PC-3 (cell line): ENCODE measurements at regions of chr3 and their contacts with region 1.

Region 1: GRCh38 chr3:194592798-194593752 is 40.1 kb downstream of the TMEM44 start:
- DNase-seq: peak; percentile 99
- ATAC-seq: peak; percentile 93
- H3K4me3 ChIP-seq: no peak overlapping the region
- H3K27ac ChIP-seq: peak overlapping the region; percentile 57
- H3K4me1 ChIP-seq: peaks cover 22% of the 10 kb centered on the region
- H3K27me3 ChIP-seq: no peaks in the 10 kb centered on the region
- CTCF ChIP-seq: peak; percentile 41

Region 2: DNA sequence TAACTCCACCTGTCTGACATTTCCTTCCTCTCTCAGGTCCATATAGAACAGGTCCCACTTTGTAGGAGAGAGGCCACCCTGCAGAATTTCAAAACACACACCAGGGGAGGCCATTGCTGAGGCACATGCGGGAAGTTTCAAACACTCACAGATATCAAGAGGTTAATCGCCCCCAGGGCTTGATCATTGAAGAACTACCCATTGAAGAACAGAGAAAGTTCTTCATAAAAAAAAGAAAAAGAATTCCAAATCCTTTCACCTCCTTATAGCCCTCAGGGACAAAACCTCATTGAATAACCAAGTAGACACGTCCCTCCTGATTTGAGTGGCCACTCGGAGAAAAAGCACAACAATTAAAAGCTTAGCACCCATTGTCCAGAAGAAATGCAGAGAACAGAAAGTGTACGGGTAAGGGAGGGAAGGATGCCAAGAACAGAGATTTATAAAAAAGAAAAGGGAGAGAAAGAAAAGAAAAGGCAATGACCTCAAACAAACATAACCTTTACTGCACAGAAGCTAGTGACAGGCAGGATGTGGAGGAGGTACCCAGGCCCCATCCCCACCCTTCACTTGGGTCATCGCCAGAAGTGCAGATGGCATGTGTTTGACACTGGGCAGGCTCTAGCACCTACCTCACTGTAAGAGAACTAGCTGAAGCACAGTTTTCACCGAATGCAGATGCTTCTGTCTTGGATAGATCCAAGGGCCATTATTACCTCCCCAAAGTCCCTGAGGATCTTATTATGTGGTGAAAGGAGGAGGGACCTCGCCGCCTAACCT is 569.4 kb before region 1 on chr3:
- CTCF ChIA-PET with region 1: no interaction called
- POLR2A ChIA-PET with region 1: no interaction called
- intact Hi-C with region 1: no loop called
- DNase-seq: peak; percentile 25
- ATAC-seq: peak; percentile 29; the same call in 1 of the 2 replicates
- H3K4me3 ChIP-seq: no peak overlapping the region
- H3K27ac ChIP-seq: no peak overlapping the region
- H3K4me1 ChIP-seq: peaks cover 6% of the 10 kb centered on the region; the same call in 1 of the 2 replicates
- H3K27me3 ChIP-seq: no peaks in the 10 kb centered on the region
- CTCF ChIP-seq: no peak

Region 3: GRCh38 chr3:194333212-194333980 is 259.7 kb before region 1 on chr3:
- CTCF ChIA-PET with region 1: no interaction called
- POLR2A ChIA-PET with region 1: no interaction called
- intact Hi-C with region 1: loop called (anchors 5 kb)
- DNase-seq: peak; percentile 95
- ATAC-seq: peak; percentile 94
- H3K4me3 ChIP-seq: peak overlapping the region; percentile 63
- H3K27ac ChIP-seq: peak overlapping the region; percentile 81
- H3K4me1 ChIP-seq: peaks cover 43% of the 10 kb centered on the region
- H3K27me3 ChIP-seq: no peaks in the 10 kb centered on the region
- CTCF ChIP-seq: peak; percentile 98

Region 4: GRCh38 chr3:194472290-194472920 is 120.7 kb before region 1 on chr3:
- CTCF ChIA-PET with region 1: interaction called, 28 read pairs
- POLR2A ChIA-PET with region 1: no interaction called
- intact Hi-C with region 1: loop called (anchors 1 kb)
- DNase-seq: peak; percentile 85
- ATAC-seq: peak; percentile 84
- H3K4me3 ChIP-seq: no peak overlapping the region
- H3K27ac ChIP-seq: no peak overlapping the region
- H3K4me1 ChIP-seq: no peaks in the 10 kb centered on the region
- H3K27me3 ChIP-seq: no peaks in the 10 kb centered on the region
- CTCF ChIP-seq: peak; percentile 95

Region 5: GRCh38 chr3:194497821-194498598 is 95.1 kb before region 1 on chr3:
- CTCF ChIA-PET with region 1: interaction called, 6 read pairs
- POLR2A ChIA-PET with region 1: no interaction called
- intact Hi-C with region 1: loop called (anchors 1 kb)
- DNase-seq: peak; percentile 90
- ATAC-seq: peak; percentile 80
- H3K4me3 ChIP-seq: peak overlapping the region; percentile 8; the same call in 1 of the 2 replicates
- H3K27ac ChIP-seq: peak overlapping the region; percentile 53
- H3K4me1 ChIP-seq: peaks cover 45% of the 10 kb centered on the region
- H3K27me3 ChIP-seq: no peaks in the 10 kb centered on the region
- CTCF ChIP-seq: no peak

Region 6: DNA sequence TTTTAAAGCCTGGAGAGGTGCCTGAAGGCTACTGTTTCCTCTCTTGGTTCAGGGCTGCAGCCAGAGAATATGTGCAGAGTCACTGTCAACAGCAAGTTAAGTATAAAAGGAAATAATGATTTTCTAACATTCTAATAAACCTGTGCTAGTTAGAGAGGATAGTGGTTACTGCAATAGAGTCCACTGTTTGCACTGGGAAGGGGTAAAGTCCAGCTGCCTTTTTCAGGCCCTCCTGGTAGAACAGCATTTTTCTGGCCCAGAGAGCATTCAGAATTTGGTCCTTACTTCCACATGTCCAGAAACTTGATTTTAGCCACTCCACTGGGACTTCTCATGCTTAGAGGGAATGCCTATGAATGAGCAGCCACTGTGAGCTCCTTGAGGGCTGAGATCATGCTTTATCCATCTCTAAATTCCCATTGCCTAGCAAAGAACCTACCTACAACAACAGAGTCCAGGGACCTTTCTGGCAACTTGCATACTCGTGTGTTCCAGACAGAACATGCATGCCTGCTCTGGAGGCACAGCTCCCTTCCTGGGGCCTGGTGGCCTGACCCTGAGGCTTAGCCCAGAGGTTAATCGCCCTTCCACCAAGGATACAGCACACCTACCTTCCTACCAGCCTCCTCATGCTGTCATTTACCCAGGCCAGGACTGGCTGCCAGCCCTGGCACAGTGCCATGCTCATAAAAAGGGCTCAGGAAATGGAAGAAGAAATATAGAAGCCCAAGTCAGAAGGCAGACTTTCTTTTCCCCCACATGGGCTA is 56.0 kb before region 1 on chr3:
- CTCF ChIA-PET with region 1: no interaction called
- POLR2A ChIA-PET with region 1: no interaction called
- intact Hi-C with region 1: loop called (anchors 2 kb)
- DNase-seq: peak; percentile 91
- ATAC-seq: peak; percentile 80
- H3K4me3 ChIP-seq: peak overlapping the region; percentile 15; the same call in 1 of the 2 replicates
- H3K27ac ChIP-seq: peak overlapping the region; percentile 69
- H3K4me1 ChIP-seq: peaks cover 15% of the 10 kb centered on the region
- H3K27me3 ChIP-seq: no peaks in the 10 kb centered on the region
- CTCF ChIP-seq: no peak

Region 7: GRCh38 chr3:194573691-194574437 is 19.2 kb before region 1 on chr3:
- CTCF ChIA-PET with region 1: interaction called, 12 read pairs
- POLR2A ChIA-PET with region 1: no interaction called
- intact Hi-C with region 1: loop called (anchors 1 kb)
- DNase-seq: peak; percentile 49
- ATAC-seq: peak; percentile 35; the same call in 1 of the 2 replicates
- H3K4me3 ChIP-seq: no peak overlapping the region
- H3K27ac ChIP-seq: no peak overlapping the region; the same call in 1 of the 2 replicates
- H3K4me1 ChIP-seq: peaks cover 37% of the 10 kb centered on the region
- H3K27me3 ChIP-seq: no peaks in the 10 kb centered on the region
- CTCF ChIP-seq: peak; percentile 73